ENCODE measurements at regions of chr3 and their contacts with region 1.

Region 1: GRCh38 chr3:193614430-193614829 is 21.4 kb downstream of the OPA1 start:
- DNase-seq: no peak
- ATAC-seq: peak in 3 of 4 experiments; percentile 41 to 75 (median 53)
- H3K4me3 ChIP-seq: no peak overlapping the region
- H3K4me3 Mint-ChIP-seq: peak overlapping the region in 1 of 3 donors; percentile 30
- H3K27ac ChIP-seq: no peak overlapping the region
- H3K27ac Mint-ChIP-seq: peak overlapping the region; percentile 39 to 75
- H3K4me1 ChIP-seq: peaks cover 0 to 6% of the 10 kb centered on the region in 2 experiments
- H3K4me1 Mint-ChIP-seq: peaks cover 25 to 37% (median 28%) of the 10 kb centered on the region in 3 donors
- H3K27me3 ChIP-seq: no peaks in the 10 kb centered on the region
- H3K27me3 Mint-ChIP-seq: no peaks in the 10 kb centered on the region

Region 2: DNA sequence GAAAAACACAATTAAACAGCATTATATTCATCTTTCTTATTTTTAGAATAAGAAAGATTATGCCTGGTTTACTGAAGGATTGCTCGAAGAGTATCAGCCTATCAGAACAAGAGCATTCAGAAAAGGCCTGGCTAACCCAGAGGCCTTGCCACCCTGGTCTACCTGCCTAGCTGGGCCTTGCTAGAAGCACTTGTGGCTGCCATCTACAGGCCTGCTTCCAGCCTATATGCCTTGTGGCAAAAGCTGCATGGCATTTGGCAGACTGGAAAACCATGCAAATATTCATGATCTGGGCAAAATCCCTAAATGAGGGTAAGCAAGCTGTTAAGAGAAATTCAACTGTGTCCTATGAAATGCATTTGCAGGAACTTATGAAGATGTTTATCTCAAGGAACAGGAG is 50.4 kb before region 1 on chr3:
- CTCF ChIA-PET with region 1: no interaction called
- POLR2A ChIA-PET with region 1: no interaction called
- DNase-seq: no peak
- ATAC-seq: no peak
- H3K4me3 ChIP-seq: no peak overlapping the region
- H3K4me3 Mint-ChIP-seq: no peak overlapping the region
- H3K27ac ChIP-seq: no peak overlapping the region
- H3K27ac Mint-ChIP-seq: no peak overlapping the region
- H3K4me1 ChIP-seq: no peaks in the 10 kb centered on the region
- H3K4me1 Mint-ChIP-seq: no peaks in the 10 kb centered on the region
- H3K27me3 ChIP-seq: no peaks in the 10 kb centered on the region
- H3K27me3 Mint-ChIP-seq: no peaks in the 10 kb centered on the region

Region 3: GRCh38 chr3:193594946-193595689 is 19.3 kb before region 1 on chr3:
- CTCF ChIA-PET with region 1: interaction called, 3 to 4 read pairs
- POLR2A ChIA-PET with region 1: interaction called in 1 of 2 experiments, 11 read pairs
- DNase-seq: no peak
- ATAC-seq: no peak
- H3K4me3 ChIP-seq: no peak overlapping the region
- H3K4me3 Mint-ChIP-seq: peak overlapping the region; percentile 89 to 97 (median 95)
- H3K27ac ChIP-seq: no peak overlapping the region
- H3K27ac Mint-ChIP-seq: peak overlapping the region in 1 of 2 donors; percentile 44
- H3K4me1 ChIP-seq: peaks cover 11 to 16% of the 10 kb centered on the region in 2 experiments
- H3K4me1 Mint-ChIP-seq: peaks cover 71 to 74% (median 72%) of the 10 kb centered on the region in 3 donors
- H3K27me3 ChIP-seq: no peaks in the 10 kb centered on the region
- H3K27me3 Mint-ChIP-seq: no peaks in the 10 kb centered on the region